Adrenal gland (tissue), 19 donors: ENCODE measurements at regions of chr17 and their contacts with region 1.

Region 1: DNA sequence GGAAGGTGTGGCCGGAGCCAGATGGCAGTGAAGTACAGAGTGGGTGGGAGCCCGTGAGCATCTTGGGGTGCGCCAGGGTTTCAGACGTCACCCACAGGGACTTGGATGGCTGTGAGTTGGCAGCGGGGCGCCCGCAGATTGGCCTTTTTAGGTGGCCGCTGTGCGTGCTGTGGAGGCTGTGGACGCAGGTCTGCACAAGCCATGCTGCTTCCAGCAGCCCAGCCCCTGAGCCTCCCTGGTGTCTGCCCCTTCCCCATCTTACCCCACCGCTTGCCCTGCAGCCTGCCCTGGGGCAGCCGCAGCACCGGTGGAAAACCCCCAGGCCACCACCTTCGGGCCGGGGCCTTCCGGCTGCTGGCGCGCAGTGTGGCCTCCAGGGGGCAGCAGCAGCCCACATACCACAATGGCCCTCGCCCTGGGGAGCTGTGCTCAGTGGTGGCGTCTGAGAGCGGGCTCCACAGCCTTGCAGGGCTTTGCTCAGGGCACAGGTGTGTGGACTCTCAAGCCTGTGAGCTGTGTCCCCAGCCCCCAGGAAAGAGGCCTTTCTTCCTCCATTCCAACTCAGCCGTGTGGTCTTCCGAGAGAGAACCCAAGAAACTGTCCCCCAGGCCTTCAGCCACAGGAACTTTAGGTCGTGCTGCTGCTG is 11.8 kb downstream of the ENDOV start:
- DNase-seq: peak; percentile 75 to 88 (median 81)
- H3K4me3 ChIP-seq: no peak overlapping the region
- H3K27ac ChIP-seq: no peak overlapping the region
- H3K4me1 ChIP-seq: peaks cover 0 to 12% of the 10 kb centered on the region in 2 donors
- H3K27me3 ChIP-seq: no peaks in the 10 kb centered on the region
- CTCF ChIP-seq: peak; percentile 94 to 99 (median 98)
- POLR2A ChIP-seq: no peak

Region 2: DNA sequence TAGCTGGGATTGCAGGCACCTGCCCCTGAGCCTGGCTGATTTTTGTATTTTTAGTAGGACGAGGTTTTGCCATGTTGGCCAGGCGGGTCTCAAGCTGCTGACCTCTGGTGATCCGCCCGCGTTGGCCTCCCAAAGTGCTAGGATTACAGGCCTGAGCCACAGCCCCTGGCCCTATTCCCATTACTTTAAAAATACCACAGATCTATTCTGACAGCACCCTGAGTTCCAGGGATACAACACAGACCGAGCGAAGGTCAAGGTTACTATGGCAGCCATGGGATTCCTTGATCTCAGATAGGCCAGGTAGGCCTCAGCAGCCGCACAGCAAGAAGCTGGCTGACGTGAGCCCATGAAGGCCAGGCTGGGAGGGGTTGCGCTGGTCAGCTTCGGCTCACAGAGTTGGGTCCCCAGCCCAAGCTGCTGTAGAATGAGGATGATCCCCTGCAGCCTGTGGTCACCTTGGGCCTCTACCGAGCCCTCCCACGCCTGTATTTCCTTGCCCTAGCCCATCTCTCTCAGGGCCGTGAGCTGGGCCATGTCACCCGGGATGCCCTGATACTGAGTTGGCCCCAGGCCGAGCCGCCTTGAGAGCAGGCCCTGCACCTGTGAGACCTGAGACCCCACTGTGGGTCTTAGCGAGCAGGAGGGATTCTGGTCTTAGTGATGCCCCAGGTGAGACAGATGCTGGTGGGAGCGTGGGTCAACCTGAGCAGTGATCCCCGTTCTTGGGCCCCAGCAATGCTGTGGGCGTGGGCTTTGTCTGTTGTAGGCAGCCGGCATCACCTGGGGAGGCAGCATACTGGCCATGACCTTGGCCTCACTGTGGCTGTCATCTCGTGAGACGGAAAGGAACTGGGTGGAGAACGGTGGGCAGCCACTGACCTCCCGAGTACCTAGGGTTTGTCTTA is 183.0 kb before region 1 on chr17:
- intact Hi-C with region 1: no loop called
- DNase-seq: peak in 1 of 7 donors; percentile 49
- H3K4me3 ChIP-seq: no peak overlapping the region
- H3K27ac ChIP-seq: peak overlapping the region in 1 of 5 donors; percentile 63
- H3K4me1 ChIP-seq: peaks cover 0 to 12% of the 10 kb centered on the region in 2 donors
- H3K27me3 ChIP-seq: no peaks in the 10 kb centered on the region
- CTCF ChIP-seq: no peak
- POLR2A ChIP-seq: no peak

Region 3: GRCh38 chr17:80474231-80474960 is 47.6 kb after region 1 on chr17:
- intact Hi-C with region 1: loop called in 1 of 2 experiments (anchors 5 kb)
- DNase-seq: peak in 3 of 7 donors; percentile 39 to 71 (median 55)
- H3K4me3 ChIP-seq: peak overlapping the region in 1 of 4 donors; percentile 50
- H3K27ac ChIP-seq: no peak overlapping the region
- H3K4me1 ChIP-seq: peaks cover 30 to 41% of the 10 kb centered on the region in 2 donors
- H3K27me3 ChIP-seq: peaks cover 49% of the 10 kb centered on the region
- CTCF ChIP-seq: peak in 2 of 6 experiments; percentile 8 to 34
- POLR2A ChIP-seq: no peak

Region 4: DNA sequence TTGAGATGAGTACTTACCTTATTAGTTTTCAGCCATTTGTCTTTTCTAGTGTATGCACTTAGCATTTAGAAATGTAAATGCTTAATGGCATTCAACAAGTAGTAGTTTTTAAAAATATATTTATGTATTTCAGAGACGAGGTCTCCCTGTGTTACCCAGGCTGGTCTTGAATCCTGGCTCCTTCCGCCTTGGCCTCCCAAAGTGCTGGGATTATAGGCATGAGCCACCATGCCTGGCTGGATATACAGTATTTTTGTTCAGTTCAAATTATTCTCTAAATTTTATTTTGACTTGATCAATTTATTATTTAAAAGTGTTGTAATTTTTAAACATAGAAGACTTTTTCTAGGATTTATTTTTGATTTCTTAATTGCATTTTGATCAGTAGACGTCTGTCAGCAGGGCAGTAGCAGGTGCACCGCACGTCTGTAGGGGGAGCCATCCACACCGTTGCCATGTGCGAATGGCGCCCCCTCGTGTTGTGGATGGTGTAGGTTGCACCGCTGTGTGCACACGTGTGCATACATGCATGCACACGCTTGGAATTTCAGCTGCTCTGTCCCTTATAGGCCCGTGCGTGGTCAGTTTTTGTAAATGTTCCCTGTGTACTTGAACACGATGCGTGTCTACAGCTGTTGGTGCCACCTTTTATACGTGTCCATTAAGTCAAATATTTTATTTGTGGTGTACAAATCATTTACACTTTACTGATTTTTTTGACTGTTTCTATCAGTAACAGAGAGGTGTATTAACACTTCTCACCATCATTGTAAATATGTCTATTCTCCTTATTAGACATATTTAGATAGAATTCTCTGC is 148.5 kb after region 1 on chr17:
- intact Hi-C with region 1: loop called (anchors 2 to 5 kb)
- DNase-seq: peak; percentile 84 to 94 (median 88)
- H3K4me3 ChIP-seq: no peak overlapping the region
- H3K27ac ChIP-seq: no peak overlapping the region
- H3K4me1 ChIP-seq: no peaks in the 10 kb centered on the region
- H3K27me3 ChIP-seq: no peaks in the 10 kb centered on the region
- CTCF ChIP-seq: peak; percentile 95 to 100 (median 99)
- POLR2A ChIP-seq: no peak

Region 5: DNA sequence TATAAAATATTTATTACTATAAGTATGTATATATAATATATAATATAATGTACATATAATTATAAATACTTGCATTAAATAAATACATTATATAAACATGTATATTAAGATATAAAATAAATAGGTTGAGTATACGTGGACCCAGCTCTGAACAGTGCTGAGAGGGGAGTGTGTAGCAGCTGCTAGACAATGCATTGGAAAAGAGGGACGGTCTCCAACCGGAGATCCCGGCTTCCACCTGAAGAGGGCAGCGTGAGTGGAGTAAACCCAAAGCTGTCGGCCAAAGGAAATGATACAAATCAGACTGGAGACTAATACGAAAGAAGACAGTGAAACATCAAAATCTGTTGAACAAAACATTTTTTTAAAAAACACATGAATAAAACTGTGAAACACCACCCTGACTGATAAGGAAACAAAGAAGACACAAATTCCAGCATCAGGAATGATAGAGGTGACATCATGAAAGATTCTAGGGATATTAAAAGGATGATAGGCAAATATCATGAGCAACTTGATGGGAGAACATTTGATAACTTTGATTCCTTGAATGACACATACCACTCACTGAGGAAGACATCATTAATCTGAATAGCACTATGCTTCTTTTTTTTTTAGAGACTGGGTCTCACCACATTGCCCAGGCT is 439.5 kb after region 1 on chr17:
- intact Hi-C with region 1: loop called in 1 of 2 experiments (anchors 10 kb)
- DNase-seq: peak; percentile 62 to 92 (median 74)
- H3K4me3 ChIP-seq: no peak overlapping the region
- H3K27ac ChIP-seq: no peak overlapping the region
- H3K4me1 ChIP-seq: no peaks in the 10 kb centered on the region
- H3K27me3 ChIP-seq: no peaks in the 10 kb centered on the region
- CTCF ChIP-seq: peak; percentile 54 to 75 (median 70)
- POLR2A ChIP-seq: no peak

Region 6: GRCh38 chr17:80981062-80981902 is 554.5 kb after region 1 on chr17:
- intact Hi-C with region 1: loop called (anchors 2 to 5 kb)
- DNase-seq: no peak
- H3K4me3 ChIP-seq: no peak overlapping the region
- H3K27ac ChIP-seq: no peak overlapping the region
- H3K4me1 ChIP-seq: peaks cover 4 to 8% of the 10 kb centered on the region in 2 donors
- H3K27me3 ChIP-seq: no peaks in the 10 kb centered on the region
- CTCF ChIP-seq: peak; percentile 8 to 88 (median 65)
- POLR2A ChIP-seq: no peak